ENCODE measurements at regions of chr5 and their contacts with region 1.

Region 1: DNA sequence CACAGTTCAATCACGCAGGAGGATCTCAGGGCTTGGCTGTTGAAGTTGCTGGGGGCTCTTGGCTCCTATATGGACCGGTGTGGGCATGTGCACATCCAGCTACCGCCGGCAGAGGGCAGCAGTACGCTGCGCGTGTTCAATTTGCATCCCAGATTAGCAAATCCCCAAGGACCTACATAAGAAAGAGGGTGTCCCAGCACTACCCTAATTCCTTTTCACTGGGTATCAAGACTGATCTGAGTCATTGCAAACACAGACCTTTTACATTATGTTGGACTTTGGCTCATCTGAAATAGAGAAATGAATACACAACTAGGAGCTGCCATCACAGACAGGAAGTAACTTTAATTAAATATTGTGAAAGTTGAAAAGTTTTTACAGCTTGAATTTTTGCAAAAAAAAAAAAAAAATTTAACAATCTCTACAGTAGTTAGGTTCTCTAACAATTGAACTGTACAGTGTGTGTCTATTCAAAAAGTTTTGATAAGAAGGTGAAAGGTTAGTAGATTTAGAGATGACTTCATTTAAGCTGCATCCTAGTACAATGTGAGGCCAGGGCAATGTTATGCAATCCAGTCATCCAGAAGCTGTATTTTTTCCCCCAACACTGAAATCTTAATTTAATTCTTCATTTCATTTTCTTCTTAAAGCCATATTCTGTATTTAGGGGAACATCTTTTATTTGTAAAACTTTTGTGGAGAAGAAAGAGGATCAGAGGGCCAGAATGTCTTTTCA is 404.0 kb downstream of the EBF1 start:
- DNase-seq: peak; percentile 32 to 49
- ATAC-seq: peak; percentile 67 to 73
- H3K4me3 ChIP-seq: no peak overlapping the region
- H3K27ac ChIP-seq: peak overlapping the region in 1 of 4 donors; percentile 23
- H3K4me1 ChIP-seq: peaks cover under 1 to 1% of the 10 kb centered on the region in 2 donors
- H3K27me3 ChIP-seq: no peaks in the 10 kb centered on the region
- CTCF ChIP-seq: peak; percentile 87 to 96 (median 89)
- POLR2A ChIP-seq: no peak

Region 2: DNA sequence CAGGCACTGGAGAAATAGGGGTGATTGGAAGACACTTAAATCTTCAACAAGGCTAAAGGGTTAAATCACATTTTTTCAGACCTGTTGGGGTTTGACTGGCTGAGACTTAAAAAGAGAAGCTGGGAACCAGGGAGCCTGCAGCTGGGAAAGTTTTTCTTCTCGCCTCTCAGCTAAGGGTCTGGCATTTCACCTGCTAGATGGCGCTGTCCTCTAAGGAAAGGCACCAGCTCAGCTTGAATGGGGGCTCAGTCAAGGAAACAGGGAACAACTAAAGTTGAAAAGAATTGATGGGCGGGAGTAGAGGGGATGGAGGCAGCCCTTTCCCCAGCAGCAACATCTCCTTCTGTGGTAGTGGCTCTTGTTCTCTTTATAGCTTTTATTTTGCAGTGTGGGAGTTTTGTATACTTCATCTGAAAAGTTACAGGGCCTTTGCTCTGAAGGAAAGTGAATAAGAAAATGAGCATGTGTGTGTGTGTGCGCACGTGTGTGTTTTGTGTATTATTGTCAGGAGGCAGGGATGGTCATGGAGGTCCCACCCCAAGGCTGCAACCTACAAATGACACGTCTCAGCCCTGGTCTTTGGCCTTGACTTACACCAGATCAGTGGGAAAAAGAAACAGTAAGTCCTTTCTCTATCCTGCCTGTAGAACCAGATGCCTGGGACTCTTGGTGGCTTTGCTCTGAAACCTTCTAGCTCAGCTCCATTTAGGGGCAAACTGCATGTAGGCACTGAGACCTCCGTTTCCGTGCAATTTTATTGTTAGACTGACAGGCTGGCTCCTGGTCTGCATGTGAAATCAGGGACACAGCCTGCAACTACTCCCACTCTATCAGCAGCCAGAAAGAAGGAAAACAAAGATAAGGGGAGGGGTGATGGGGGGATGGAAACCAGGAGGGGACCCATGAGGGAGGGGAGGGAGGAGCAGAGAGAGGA is 520.6 kb before region 1 on chr5:
- in situ Hi-C with region 1: loop called in 2 of 4 experiments (anchors 10 kb)
- intact Hi-C with region 1: loop called (anchors 5 kb)
- DNase-seq: peak; percentile 38 to 42
- ATAC-seq: peak; percentile 43 to 61
- H3K4me3 ChIP-seq: no peak overlapping the region
- H3K27ac ChIP-seq: no peak overlapping the region
- H3K4me1 ChIP-seq: no peaks in the 10 kb centered on the region
- H3K27me3 ChIP-seq: no peaks in the 10 kb centered on the region
- CTCF ChIP-seq: peak; percentile 36 to 66 (median 56)
- POLR2A ChIP-seq: no peak

Region 3: GRCh38 chr5:158320178-158320674 is 375.5 kb before region 1 on chr5:
- in situ Hi-C with region 1: no loop called
- intact Hi-C with region 1: no loop called
- DNase-seq: no peak
- ATAC-seq: no peak
- H3K4me3 ChIP-seq: no peak overlapping the region
- H3K27ac ChIP-seq: no peak overlapping the region
- H3K4me1 ChIP-seq: no peaks in the 10 kb centered on the region
- H3K27me3 ChIP-seq: no peaks in the 10 kb centered on the region
- CTCF ChIP-seq: no peak
- POLR2A ChIP-seq: no peak

Region 4: DNA sequence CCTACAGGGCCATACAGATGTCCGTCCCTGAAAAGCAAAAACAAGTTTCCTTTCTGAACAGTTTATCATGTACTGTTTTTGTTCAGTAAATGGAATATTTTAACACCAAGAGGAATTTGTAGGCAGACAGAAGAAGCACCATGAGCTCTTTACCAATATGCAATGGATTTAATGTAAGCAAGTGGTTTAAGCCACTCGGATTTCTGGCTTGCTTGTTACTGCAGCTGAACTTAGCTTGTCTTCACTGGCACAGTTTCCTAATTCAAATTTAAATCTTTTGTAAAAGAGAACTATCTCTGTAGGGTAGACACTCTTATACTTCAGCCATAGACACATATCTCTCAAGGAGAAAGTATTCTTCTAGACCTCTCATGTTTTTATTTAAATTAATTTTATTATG is 416.7 kb after region 1 on chr5:
- in situ Hi-C with region 1: loop called (anchors 5 to 10 kb)
- intact Hi-C with region 1: no loop called
- DNase-seq: no peak
- ATAC-seq: no peak
- H3K4me3 ChIP-seq: no peak overlapping the region
- H3K27ac ChIP-seq: no peak overlapping the region
- H3K4me1 ChIP-seq: no peaks in the 10 kb centered on the region
- H3K27me3 ChIP-seq: peaks cover 1 to 10% (median 3%) of the 10 kb centered on the region in 3 donors
- CTCF ChIP-seq: no peak
- POLR2A ChIP-seq: no peak

Region 5: DNA sequence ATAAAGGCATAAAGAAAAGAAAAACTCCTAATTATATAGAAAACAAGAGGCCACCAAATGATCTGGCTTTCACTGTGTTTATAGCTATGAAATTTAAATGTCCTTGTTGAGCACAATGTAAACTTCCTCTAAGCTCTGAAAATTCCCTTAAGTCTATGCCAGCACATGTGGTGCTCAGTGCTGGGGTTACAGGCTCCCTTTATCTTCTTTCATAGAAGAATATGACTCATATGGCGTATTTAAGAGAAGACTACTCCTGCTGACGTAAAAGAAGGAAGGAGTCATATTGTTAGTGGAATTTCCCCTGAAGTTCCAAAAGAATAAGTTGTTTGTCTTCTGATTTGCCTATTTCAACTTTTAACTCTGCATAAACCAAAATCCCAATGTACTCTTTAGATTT is 483.2 kb after region 1 on chr5:
- in situ Hi-C with region 1: no loop called
- intact Hi-C with region 1: no loop called
- DNase-seq: no peak
- ATAC-seq: no peak
- H3K4me3 ChIP-seq: no peak overlapping the region
- H3K27ac ChIP-seq: peak overlapping the region in 3 of 4 donors; percentile 37 to 50 (median 37)
- H3K4me1 ChIP-seq: peaks cover 14 to 46% of the 10 kb centered on the region in 2 donors
- H3K27me3 ChIP-seq: no peaks in the 10 kb centered on the region
- CTCF ChIP-seq: no peak
- POLR2A ChIP-seq: peak in 1 of 2 donors; percentile 14

Region 6: DNA sequence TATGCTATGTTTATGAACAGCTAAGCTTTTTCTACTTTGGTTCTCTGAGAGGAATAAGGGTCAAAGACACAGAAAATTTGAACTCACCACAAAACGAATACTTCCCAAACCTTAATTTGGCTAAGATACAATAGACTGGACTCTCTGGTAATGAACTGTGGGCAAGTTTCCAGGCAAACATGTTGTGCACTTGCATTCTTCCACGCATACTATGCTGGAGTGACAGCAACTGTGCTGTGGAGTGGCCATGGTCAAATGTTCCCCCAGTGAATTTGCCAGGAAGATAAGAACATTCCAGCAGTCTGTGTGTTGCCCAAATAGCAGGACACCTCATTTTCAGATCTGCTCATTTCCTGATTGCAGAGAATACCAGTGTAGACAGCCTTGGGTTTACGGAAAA is 909.8 kb after region 1 on chr5:
- in situ Hi-C with region 1: no loop called
- intact Hi-C with region 1: no loop called
- DNase-seq: no peak
- ATAC-seq: no peak
- H3K4me3 ChIP-seq: no peak overlapping the region
- H3K27ac ChIP-seq: no peak overlapping the region
- H3K4me1 ChIP-seq: no peaks in the 10 kb centered on the region
- H3K27me3 ChIP-seq: no peaks in the 10 kb centered on the region
- CTCF ChIP-seq: no peak
- POLR2A ChIP-seq: no peak

Measured in gastrocnemius medialis (tissue), 4 donors.